ENCODE measurements at regions of chr1 and their contacts with region 1.

Region 1: GRCh38 chr1:9101510-9102146 is 27.3 kb downstream of the GPR157 start:
- H3K4me3 Mint-ChIP-seq: no peak overlapping the region
- H3K27ac Mint-ChIP-seq: no peak overlapping the region
- H3K4me1 Mint-ChIP-seq: no peaks in the 10 kb centered on the region
- H3K27me3 Mint-ChIP-seq: no peaks in the 10 kb centered on the region

Region 2: DNA sequence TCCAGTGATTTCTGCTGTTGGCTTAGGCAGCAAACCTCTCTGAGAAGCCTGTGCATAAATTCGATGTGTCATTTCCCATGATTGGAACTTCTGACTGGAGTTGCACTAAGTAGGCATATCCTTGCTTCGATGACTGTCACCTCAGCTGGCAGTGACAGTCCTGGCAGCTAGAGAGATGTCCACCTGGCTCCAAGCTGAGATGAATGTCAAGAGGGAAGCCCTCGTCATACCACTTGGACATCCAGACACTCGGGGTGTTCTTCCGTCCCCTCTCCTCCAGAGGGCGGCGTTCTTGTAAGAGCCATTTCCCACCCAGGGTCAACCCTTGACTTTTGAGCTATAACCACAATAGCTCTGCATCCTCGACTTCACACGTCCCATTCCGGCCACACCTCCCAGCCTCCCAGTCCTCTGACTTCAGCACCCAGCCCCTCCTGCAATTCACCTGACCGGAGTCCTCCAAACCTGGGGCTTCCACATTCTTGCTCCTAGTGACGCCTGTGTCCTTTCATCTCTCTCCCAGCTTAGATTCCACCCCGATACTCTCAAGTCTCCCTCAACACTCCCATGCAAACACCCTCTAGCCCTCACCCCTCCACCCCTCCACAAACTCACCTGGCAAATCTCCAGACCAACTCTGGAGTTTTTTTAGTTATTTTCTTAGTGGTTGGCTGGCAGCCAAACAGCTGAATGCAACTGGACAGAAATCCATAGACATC is 138.7 kb before region 1 on chr1:
- intact Hi-C with region 1: loop called (anchors 1 kb)
- H3K4me3 Mint-ChIP-seq: no peak overlapping the region
- H3K27ac Mint-ChIP-seq: no peak overlapping the region
- H3K4me1 Mint-ChIP-seq: peaks cover 6% of the 10 kb centered on the region
- H3K27me3 Mint-ChIP-seq: peaks cover 2% of the 10 kb centered on the region

Region 3: GRCh38 chr1:9135073-9135836 is 33.6 kb after region 1 on chr1:
- intact Hi-C with region 1: no loop called
- H3K4me3 Mint-ChIP-seq: no peak overlapping the region
- H3K27ac Mint-ChIP-seq: peak overlapping the region; percentile 63
- H3K4me1 Mint-ChIP-seq: peaks cover 25% of the 10 kb centered on the region
- H3K27me3 Mint-ChIP-seq: peaks cover 70% of the 10 kb centered on the region

Region 4: GRCh38 chr1:9166289-9167235 is 64.9 kb after region 1 on chr1:
- intact Hi-C with region 1: no loop called
- H3K4me3 Mint-ChIP-seq: no peak overlapping the region
- H3K27ac Mint-ChIP-seq: peak overlapping the region; percentile 55
- H3K4me1 Mint-ChIP-seq: peaks cover 55% of the 10 kb centered on the region
- H3K27me3 Mint-ChIP-seq: peaks cover 9% of the 10 kb centered on the region